Activated B cell treated with CpG ODN at 0.5 μM for 24 hours (primary cell): ENCODE measurements at regions of chr5 and their contacts with region 1.

Region 1: GRCh38 chr5:82351754-82352145 is 73.6 kb upstream of the RPS23 start:
- DNase-seq: no peak
- ATAC-seq: peak; percentile 62
- H3K4me3 Mint-ChIP-seq: no peak overlapping the region
- H3K27ac Mint-ChIP-seq: no peak overlapping the region
- H3K4me1 Mint-ChIP-seq: peaks cover 1% of the 10 kb centered on the region
- H3K27me3 Mint-ChIP-seq: peaks cover 3% of the 10 kb centered on the region
- CTCF ChIP-seq: peak; percentile 91

Region 2: DNA sequence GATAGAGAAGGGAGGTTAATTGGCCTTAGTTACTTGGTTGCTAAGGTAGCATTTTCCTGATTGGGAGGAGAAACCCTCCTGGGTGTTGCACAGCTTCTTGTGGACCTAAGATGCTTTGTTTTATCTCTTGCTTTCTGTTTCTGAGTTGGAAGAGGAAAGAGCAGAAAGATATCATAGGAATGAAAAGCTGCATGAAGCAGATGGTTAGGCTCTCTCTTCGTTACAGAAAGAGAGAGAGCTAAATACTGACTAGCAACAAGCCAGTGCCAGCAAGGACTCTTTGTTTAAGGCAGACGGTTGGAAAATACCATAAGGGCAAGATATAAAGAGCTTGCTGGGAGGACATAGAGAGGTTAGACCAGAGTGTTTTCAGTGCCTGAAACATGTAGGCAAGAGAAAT is 276.8 kb before region 1 on chr5:
- CTCF ChIA-PET with region 1: no interaction called
- POLR2A ChIA-PET with region 1: no interaction called
- intact Hi-C with region 1: no loop called
- DNase-seq: no peak
- ATAC-seq: no peak
- H3K4me3 Mint-ChIP-seq: no peak overlapping the region
- H3K27ac Mint-ChIP-seq: no peak overlapping the region
- H3K4me1 Mint-ChIP-seq: no peaks in the 10 kb centered on the region
- H3K27me3 Mint-ChIP-seq: no peaks in the 10 kb centered on the region
- CTCF ChIP-seq: no peak

Region 3: GRCh38 chr5:82641331-82642003 is 289.7 kb after region 1 on chr5:
- CTCF ChIA-PET with region 1: no interaction called
- POLR2A ChIA-PET with region 1: no interaction called
- intact Hi-C with region 1: loop called (anchors 2 kb)
- DNase-seq: no peak
- ATAC-seq: no peak
- H3K4me3 Mint-ChIP-seq: no peak overlapping the region
- H3K27ac Mint-ChIP-seq: no peak overlapping the region
- H3K4me1 Mint-ChIP-seq: no peaks in the 10 kb centered on the region
- H3K27me3 Mint-ChIP-seq: no peaks in the 10 kb centered on the region
- CTCF ChIP-seq: peak; percentile 14

Region 4: GRCh38 chr5:83430130-83431010 is 1078.6 kb after region 1 on chr5:
- CTCF ChIA-PET with region 1: interaction called, 7 read pairs
- POLR2A ChIA-PET with region 1: no interaction called
- intact Hi-C with region 1: loop called (anchors 1 kb)
- DNase-seq: no peak
- ATAC-seq: peak; percentile 65
- H3K4me3 Mint-ChIP-seq: no peak overlapping the region
- H3K27ac Mint-ChIP-seq: no peak overlapping the region
- H3K4me1 Mint-ChIP-seq: no peaks in the 10 kb centered on the region
- H3K27me3 Mint-ChIP-seq: no peaks in the 10 kb centered on the region
- CTCF ChIP-seq: peak; percentile 61

Region 5: DNA sequence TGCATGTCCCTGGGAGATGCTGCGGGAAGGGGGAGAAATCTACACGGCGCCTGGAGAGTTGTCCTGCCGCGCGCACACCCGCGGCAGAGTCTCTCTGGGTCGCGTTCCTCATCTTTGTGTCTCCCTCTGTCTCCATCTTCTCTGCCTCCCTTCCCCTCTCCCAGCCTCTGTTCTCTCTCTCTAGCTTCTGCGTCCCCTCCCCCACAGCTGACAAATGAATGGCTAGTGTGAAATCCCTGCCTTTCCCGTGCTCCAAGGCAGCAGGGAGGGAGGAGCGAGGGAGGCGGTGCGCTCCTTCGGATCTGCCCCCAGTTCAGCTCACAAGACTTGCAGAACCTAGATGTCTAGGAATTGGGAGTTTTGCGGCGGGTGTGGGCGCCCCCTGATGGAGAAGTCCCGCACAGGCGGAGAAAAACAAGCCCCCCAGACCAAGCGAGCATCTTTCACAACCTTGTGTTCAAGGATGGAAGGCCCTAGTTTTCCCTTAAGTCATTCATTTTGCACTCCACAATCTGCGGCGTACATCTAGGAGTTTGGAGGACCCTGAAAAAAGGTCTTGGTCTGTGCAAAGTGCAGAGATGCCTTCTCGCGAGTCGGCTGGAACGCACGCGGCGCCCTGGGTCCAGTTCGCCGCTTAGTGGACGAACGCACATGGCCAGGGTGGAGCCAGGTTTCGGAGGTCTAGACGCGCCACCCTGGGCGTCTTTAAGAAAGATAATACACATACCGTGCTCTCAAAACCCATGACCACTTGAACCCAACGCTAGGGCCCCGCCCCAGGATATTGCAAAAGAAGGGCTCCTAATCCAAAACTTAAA is 1121.8 kb after region 1 on chr5:
- CTCF ChIA-PET with region 1: interaction called, 4 read pairs
- POLR2A ChIA-PET with region 1: no interaction called
- intact Hi-C with region 1: loop called (anchors 1 kb)
- DNase-seq: peak; percentile 33
- ATAC-seq: peak; percentile 56
- H3K4me3 Mint-ChIP-seq: peak overlapping the region; percentile 76
- H3K27ac Mint-ChIP-seq: no peak overlapping the region
- H3K4me1 Mint-ChIP-seq: peaks cover 38% of the 10 kb centered on the region
- H3K27me3 Mint-ChIP-seq: peaks cover 58% of the 10 kb centered on the region
- CTCF ChIP-seq: no peak

Region 6: DNA sequence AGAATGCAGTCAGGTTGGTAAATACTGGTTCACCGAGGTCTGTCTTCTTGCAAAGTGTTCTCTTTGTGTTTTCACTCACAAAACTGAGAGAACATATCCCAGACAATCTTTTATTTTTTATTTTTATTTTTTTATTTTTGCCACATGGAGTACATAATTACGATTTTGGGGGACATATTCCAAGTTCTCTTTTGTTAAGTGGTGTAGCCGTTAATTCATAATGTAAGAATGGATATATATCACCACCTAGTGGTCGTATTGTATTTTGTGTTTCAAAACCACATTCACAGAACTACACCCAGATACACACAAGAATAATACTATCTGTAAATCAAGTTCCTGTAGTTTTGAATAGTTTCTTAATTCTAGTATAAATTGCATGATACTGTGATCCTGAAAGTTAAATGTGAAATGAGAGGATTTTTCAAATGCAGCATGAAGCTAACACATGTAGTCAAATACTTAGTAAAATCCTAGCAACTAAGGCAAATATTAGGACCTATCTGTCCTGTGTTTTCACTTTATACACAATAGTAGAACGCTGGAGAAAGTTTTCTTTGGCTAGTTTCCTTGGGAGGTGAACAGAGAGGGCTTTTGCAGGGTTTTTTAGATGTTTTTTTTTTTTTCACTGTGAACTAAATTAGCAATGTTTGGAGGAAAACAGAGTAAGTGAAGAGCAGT is 1212.5 kb after region 1 on chr5:
- CTCF ChIA-PET with region 1: interaction called, 64 read pairs
- POLR2A ChIA-PET with region 1: no interaction called
- intact Hi-C with region 1: loop called (anchors 1 kb)
- DNase-seq: no peak
- ATAC-seq: no peak
- H3K4me3 Mint-ChIP-seq: no peak overlapping the region
- H3K27ac Mint-ChIP-seq: no peak overlapping the region
- H3K4me1 Mint-ChIP-seq: no peaks in the 10 kb centered on the region
- H3K27me3 Mint-ChIP-seq: peaks cover 7% of the 10 kb centered on the region
- CTCF ChIP-seq: peak; percentile 71

Region 7: DNA sequence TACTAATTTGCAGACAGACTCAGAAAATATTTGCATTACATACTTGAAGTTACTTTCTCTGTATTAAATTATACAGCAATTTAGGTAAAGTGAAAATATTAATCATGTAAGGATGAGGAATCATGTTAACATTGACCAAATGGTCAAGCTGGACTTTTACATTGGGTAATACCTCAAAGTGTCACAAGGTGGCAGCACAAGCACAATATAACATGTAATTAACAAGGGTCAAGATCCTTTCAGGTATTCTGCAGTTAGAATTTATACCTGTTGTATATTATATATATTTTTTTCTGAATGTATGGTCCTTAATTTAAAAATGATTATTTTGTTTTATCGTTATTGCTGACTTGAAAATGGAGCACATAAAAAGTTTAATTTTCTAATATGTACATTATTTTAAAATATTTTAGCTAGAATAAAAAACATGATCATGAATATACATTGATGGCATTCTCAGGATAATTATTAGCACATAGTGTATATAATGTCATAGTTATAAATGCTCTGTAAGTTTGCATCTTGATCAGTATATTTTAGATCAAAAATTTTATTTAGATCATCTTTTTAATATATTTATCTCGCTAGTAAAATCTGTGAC is 1360.4 kb after region 1 on chr5:
- CTCF ChIA-PET with region 1: no interaction called
- POLR2A ChIA-PET with region 1: no interaction called
- intact Hi-C with region 1: loop called (anchors 5 kb)
- DNase-seq: no peak
- ATAC-seq: no peak
- H3K4me3 Mint-ChIP-seq: no peak overlapping the region
- H3K27ac Mint-ChIP-seq: no peak overlapping the region
- H3K4me1 Mint-ChIP-seq: no peaks in the 10 kb centered on the region
- H3K27me3 Mint-ChIP-seq: peaks cover 2% of the 10 kb centered on the region
- CTCF ChIP-seq: peak; percentile 84